ENCODE measurements at regions of chr5 and their contacts with region 1.

Region 1: GRCh38 chr5:58452566-58453258 is 7.2 kb downstream of the PLK2 start:
- DNase-seq: no peak
- H3K4me3 ChIP-seq: no peak overlapping the region
- H3K27ac ChIP-seq: peak overlapping the region; percentile 35
- H3K4me1 ChIP-seq: peaks cover 32% of the 10 kb centered on the region
- H3K27me3 ChIP-seq: no peaks in the 10 kb centered on the region
- CTCF ChIP-seq: no peak

Region 2: GRCh38 chr5:57692582-57693487 is 759.9 kb before region 1 on chr5:
- CTCF ChIA-PET with region 1: no interaction called
- dilution Hi-C with region 1: no loop called
- in situ Hi-C with region 1: no loop called
- intact Hi-C with region 1: no loop called
- DNase-seq: peak; percentile 98
- H3K4me3 ChIP-seq: peak overlapping the region in 2 of 3 experiments; percentile 36 to 48
- H3K27ac ChIP-seq: peak overlapping the region; percentile 90
- H3K4me1 ChIP-seq: peaks cover 44% of the 10 kb centered on the region
- H3K27me3 ChIP-seq: no peaks in the 10 kb centered on the region
- CTCF ChIP-seq: no peak

Region 3: GRCh38 chr5:58114324-58114723 is 338.4 kb before region 1 on chr5:
- CTCF ChIA-PET with region 1: no interaction called
- dilution Hi-C with region 1: no loop called
- in situ Hi-C with region 1: no loop called
- intact Hi-C with region 1: loop called (anchors 5 kb)
- DNase-seq: peak; percentile 91
- H3K4me3 ChIP-seq: no peak overlapping the region
- H3K27ac ChIP-seq: peak overlapping the region; percentile 58
- H3K4me1 ChIP-seq: peaks cover 12% of the 10 kb centered on the region
- H3K27me3 ChIP-seq: no peaks in the 10 kb centered on the region
- CTCF ChIP-seq: no peak

Region 4: DNA sequence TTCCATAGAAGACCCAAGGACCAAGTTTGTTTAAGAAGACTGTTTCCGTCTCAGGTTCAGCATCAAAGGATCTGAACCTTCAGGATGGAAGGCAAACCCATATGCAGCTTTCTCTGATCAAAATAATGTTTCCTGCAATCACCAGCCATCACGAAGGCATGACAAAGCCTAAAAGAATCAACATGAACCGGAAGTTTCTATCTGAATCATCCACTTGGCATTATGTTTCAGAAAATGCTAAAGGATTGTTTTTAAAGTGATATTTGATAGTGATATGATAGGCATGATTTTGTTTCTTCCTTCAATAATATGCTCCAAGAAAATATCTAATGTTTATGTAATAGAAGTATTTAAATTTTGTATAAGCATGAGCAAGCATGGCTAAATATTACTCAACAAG is 212.4 kb before region 1 on chr5:
- CTCF ChIA-PET with region 1: no interaction called
- dilution Hi-C with region 1: no loop called
- in situ Hi-C with region 1: no loop called
- intact Hi-C with region 1: loop called (anchors 5 kb)
- DNase-seq: peak; percentile 64
- H3K4me3 ChIP-seq: no peak overlapping the region
- H3K27ac ChIP-seq: peak overlapping the region; percentile 11
- H3K4me1 ChIP-seq: peaks cover 14% of the 10 kb centered on the region
- H3K27me3 ChIP-seq: no peaks in the 10 kb centered on the region
- CTCF ChIP-seq: no peak

Region 5: GRCh38 chr5:58259685-58260152 is 193.0 kb before region 1 on chr5:
- CTCF ChIA-PET with region 1: no interaction called
- dilution Hi-C with region 1: no loop called
- in situ Hi-C with region 1: no loop called
- intact Hi-C with region 1: loop called (anchors 5 kb)
- DNase-seq: peak; percentile 99
- H3K4me3 ChIP-seq: peak overlapping the region in 2 of 3 experiments; percentile 7 to 22
- H3K27ac ChIP-seq: peak overlapping the region; percentile 90
- H3K4me1 ChIP-seq: peaks cover 28% of the 10 kb centered on the region
- H3K27me3 ChIP-seq: no peaks in the 10 kb centered on the region
- CTCF ChIP-seq: no peak

Region 6: DNA sequence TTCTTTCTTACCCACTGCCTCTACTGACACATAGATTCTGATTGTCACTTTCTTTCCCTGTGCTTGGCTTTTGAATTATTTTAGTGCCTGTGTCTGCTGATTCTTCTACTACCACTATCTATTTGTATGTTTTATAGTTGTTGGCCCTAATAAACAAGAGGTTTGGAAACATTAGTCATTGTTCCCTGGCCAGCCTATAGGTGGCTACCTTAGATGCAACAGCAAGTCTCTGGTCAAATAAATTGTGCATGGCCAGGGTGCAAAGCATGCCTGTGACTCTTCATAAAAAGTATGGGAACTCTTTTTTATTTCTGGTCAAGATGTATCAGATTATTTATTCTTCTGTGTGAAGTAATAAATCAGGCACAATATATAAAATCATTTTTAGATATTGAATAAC is 117.2 kb before region 1 on chr5:
- CTCF ChIA-PET with region 1: no interaction called
- dilution Hi-C with region 1: no loop called
- in situ Hi-C with region 1: no loop called
- intact Hi-C with region 1: loop called (anchors 2 kb)
- DNase-seq: peak; percentile 26
- H3K4me3 ChIP-seq: no peak overlapping the region
- H3K27ac ChIP-seq: no peak overlapping the region
- H3K4me1 ChIP-seq: peaks cover 9% of the 10 kb centered on the region
- H3K27me3 ChIP-seq: no peaks in the 10 kb centered on the region
- CTCF ChIP-seq: peak in 1 of 2 donors; percentile 59

Region 7: DNA sequence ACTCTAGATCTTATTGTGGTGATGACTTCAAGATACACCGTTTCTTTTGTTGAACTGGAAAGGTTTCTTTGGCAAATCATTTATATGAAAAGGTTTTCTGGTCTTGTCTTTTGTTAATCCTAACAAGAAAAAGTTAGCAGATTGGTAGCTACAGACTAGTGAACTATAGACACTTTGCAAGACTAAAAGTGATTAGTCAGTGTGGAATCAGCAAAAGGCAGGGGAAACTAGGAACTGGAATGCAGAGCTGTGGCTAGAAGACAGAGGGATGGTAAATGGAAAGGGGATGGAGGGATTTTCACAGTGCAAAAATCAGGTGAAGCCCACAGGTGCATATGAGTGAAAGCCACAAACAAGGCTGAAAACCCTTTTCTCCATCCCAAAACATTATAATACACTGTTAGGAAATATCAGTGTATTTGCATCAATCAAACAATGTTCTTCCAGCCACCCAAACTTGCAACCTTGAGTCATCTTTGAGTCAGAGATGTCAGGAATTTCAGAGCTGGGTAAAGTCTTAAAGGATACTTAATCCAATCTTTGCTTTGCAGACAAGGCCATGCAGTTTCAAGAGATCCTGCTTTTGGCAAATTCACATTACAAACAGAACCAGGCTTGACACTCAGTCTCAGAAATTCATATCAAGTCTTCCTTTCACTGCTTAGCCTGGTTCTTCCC is 45.5 kb before region 1 on chr5:
- CTCF ChIA-PET with region 1: no interaction called
- dilution Hi-C with region 1: no loop called
- in situ Hi-C with region 1: no loop called
- intact Hi-C with region 1: loop called (anchors 2 kb)
- DNase-seq: peak; percentile 83
- H3K4me3 ChIP-seq: no peak overlapping the region
- H3K27ac ChIP-seq: peak overlapping the region; percentile 76
- H3K4me1 ChIP-seq: peaks cover 66% of the 10 kb centered on the region
- H3K27me3 ChIP-seq: no peaks in the 10 kb centered on the region
- CTCF ChIP-seq: no peak

Region 8: GRCh38 chr5:58517198-58517597 is 64.5 kb after region 1 on chr5:
- CTCF ChIA-PET with region 1: no interaction called
- dilution Hi-C with region 1: no loop called
- in situ Hi-C with region 1: no loop called
- intact Hi-C with region 1: no loop called
- DNase-seq: no peak
- H3K4me3 ChIP-seq: no peak overlapping the region
- H3K27ac ChIP-seq: no peak overlapping the region
- H3K4me1 ChIP-seq: no peaks in the 10 kb centered on the region
- H3K27me3 ChIP-seq: no peaks in the 10 kb centered on the region
- CTCF ChIP-seq: no peak

Measured in mammary epithelial cell (primary cell).